Heart right ventricle (tissue), 16 donors: ENCODE measurements at regions of chr18 and their contacts with region 1.

Region 1: DNA sequence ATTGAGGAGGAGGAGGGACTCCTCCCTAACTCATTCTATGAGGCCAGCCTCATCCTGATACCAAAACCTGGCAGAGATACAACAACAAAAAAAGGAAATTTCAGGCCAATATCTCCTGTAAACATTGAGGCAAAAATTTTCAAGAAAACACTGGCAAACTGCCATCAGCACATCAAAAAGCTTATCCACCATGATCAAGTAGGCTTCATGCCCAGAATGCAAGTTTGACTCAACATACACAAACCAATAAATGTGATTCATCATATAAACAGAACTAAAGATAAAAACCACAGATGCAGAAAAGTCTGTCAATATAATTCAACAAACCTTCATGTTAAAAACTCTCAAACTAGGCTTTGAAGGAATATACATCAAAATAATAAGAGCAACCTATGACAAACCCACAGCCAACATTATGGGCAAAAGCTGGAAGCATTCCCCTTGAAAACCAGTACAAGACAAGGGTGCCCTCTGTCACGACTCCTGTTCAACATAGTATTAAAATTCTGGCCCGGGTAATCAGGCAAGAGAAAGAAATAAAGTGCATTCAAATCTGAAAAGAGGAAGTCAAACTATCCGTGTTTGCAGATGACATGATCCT is 1014.3 kb downstream of the CBLN2 start:
- DNase-seq: no peak
- ATAC-seq: no peak
- H3K4me3 ChIP-seq: no peak overlapping the region
- H3K27ac ChIP-seq: no peak overlapping the region
- H3K4me1 ChIP-seq: no peaks in the 10 kb centered on the region
- H3K27me3 ChIP-seq: no peaks in the 10 kb centered on the region
- CTCF ChIP-seq: no peak

Region 2: GRCh38 chr18:71471963-71472725 is 57.7 kb before region 1 on chr18:
- intact Hi-C with region 1: loop called in 1 of 10 experiments (anchors 10 kb)
- DNase-seq: no peak
- ATAC-seq: no peak
- H3K4me3 ChIP-seq: no peak overlapping the region
- H3K27ac ChIP-seq: no peak overlapping the region
- H3K4me1 ChIP-seq: no peaks in the 10 kb centered on the region
- H3K27me3 ChIP-seq: no peaks in the 10 kb centered on the region
- CTCF ChIP-seq: no peak

Region 3: GRCh38 chr18:71583291-71583690 is 53.5 kb after region 1 on chr18:
- intact Hi-C with region 1: loop called in 1 of 10 experiments (anchors 10 kb)
- DNase-seq: no peak
- ATAC-seq: no peak
- H3K4me3 ChIP-seq: no peak overlapping the region
- H3K27ac ChIP-seq: no peak overlapping the region
- H3K4me1 ChIP-seq: no peaks in the 10 kb centered on the region
- H3K27me3 ChIP-seq: no peaks in the 10 kb centered on the region
- CTCF ChIP-seq: no peak

Region 4: GRCh38 chr18:71784777-71785176 is 255.0 kb after region 1 on chr18:
- intact Hi-C with region 1: loop called in 1 of 10 experiments (anchors 5 kb)
- DNase-seq: no peak
- ATAC-seq: no peak
- H3K4me3 ChIP-seq: no peak overlapping the region
- H3K27ac ChIP-seq: no peak overlapping the region
- H3K4me1 ChIP-seq: no peaks in the 10 kb centered on the region
- H3K27me3 ChIP-seq: no peaks in the 10 kb centered on the region
- CTCF ChIP-seq: no peak